MCF 10A (cell line): ENCODE measurements at regions of chr19 and their contacts with region 1.

Region 1: GRCh38 chr19:6103217-6103644 is 7.1 kb downstream of the RFX2 start:
- DNase-seq: peak; percentile 98
- H3K4me3 Mint-ChIP-seq: peak overlapping the region; percentile 24
- H3K27ac Mint-ChIP-seq: peak overlapping the region; percentile 97
- H3K4me1 Mint-ChIP-seq: peaks cover 60% of the 10 kb centered on the region
- H3K27me3 Mint-ChIP-seq: no peaks in the 10 kb centered on the region
- CTCF ChIP-seq: no peak

Region 2: GRCh38 chr19:6056801-6057650 is 46.2 kb before region 1 on chr19:
- CTCF ChIA-PET with region 1: interaction called, 3 read pairs
- POLR2A ChIA-PET with region 1: interaction called, 125 read pairs
- intact Hi-C with region 1: loop called (anchors 1 kb)
- DNase-seq: peak; percentile 98
- H3K4me3 Mint-ChIP-seq: peak overlapping the region; percentile 57
- H3K27ac Mint-ChIP-seq: peak overlapping the region; percentile 100
- H3K4me1 Mint-ChIP-seq: peaks cover 40% of the 10 kb centered on the region
- H3K27me3 Mint-ChIP-seq: no peaks in the 10 kb centered on the region
- CTCF ChIP-seq: no peak

Region 3: GRCh38 chr19:6065685-6066374 is 37.4 kb before region 1 on chr19:
- CTCF ChIA-PET with region 1: interaction called, 3 read pairs
- POLR2A ChIA-PET with region 1: interaction called, 125 read pairs
- intact Hi-C with region 1: no loop called
- DNase-seq: no peak
- H3K4me3 Mint-ChIP-seq: no peak overlapping the region
- H3K27ac Mint-ChIP-seq: no peak overlapping the region
- H3K4me1 Mint-ChIP-seq: peaks cover 41% of the 10 kb centered on the region
- H3K27me3 Mint-ChIP-seq: no peaks in the 10 kb centered on the region
- CTCF ChIP-seq: no peak

Region 4: GRCh38 chr19:6087074-6087571 is 16.1 kb before region 1 on chr19:
- CTCF ChIA-PET with region 1: interaction called, 12 read pairs
- POLR2A ChIA-PET with region 1: interaction called, 129 read pairs
- intact Hi-C with region 1: no loop called
- DNase-seq: no peak
- H3K4me3 Mint-ChIP-seq: no peak overlapping the region
- H3K27ac Mint-ChIP-seq: peak overlapping the region; percentile 91
- H3K4me1 Mint-ChIP-seq: peaks cover 29% of the 10 kb centered on the region
- H3K27me3 Mint-ChIP-seq: no peaks in the 10 kb centered on the region
- CTCF ChIP-seq: no peak

Region 5: GRCh38 chr19:6092329-6093286 is 10.6 kb before region 1 on chr19:
- CTCF ChIA-PET with region 1: interaction called, 12 read pairs
- POLR2A ChIA-PET with region 1: interaction called, 129 read pairs
- intact Hi-C with region 1: no loop called
- DNase-seq: peak; percentile 88
- H3K4me3 Mint-ChIP-seq: peak overlapping the region; percentile 66
- H3K27ac Mint-ChIP-seq: peak overlapping the region; percentile 97
- H3K4me1 Mint-ChIP-seq: peaks cover 32% of the 10 kb centered on the region
- H3K27me3 Mint-ChIP-seq: no peaks in the 10 kb centered on the region
- CTCF ChIP-seq: no peak

Region 6: GRCh38 chr19:6172074-6173063 is 69.1 kb after region 1 on chr19:
- CTCF ChIA-PET with region 1: no interaction called
- POLR2A ChIA-PET with region 1: no interaction called
- intact Hi-C with region 1: no loop called
- DNase-seq: no peak
- H3K4me3 Mint-ChIP-seq: no peak overlapping the region
- H3K27ac Mint-ChIP-seq: no peak overlapping the region
- H3K4me1 Mint-ChIP-seq: no peaks in the 10 kb centered on the region
- H3K27me3 Mint-ChIP-seq: peaks cover 74% of the 10 kb centered on the region
- CTCF ChIP-seq: no peak